CD4-positive, alpha-beta T cell (primary cell): ENCODE measurements at regions of chr14 and their contacts with region 1.

Region 1: GRCh38 chr14:106657460-106657859 is 1131.1 kb downstream of the TMEM121 start:
- DNase-seq: peak; percentile 40 to 81 (median 56)
- ATAC-seq: peak; percentile 76
- H3K4me3 ChIP-seq: no peak overlapping the region
- H3K4me3 Mint-ChIP-seq: no peak overlapping the region
- H3K27ac ChIP-seq: no peak overlapping the region
- H3K27ac Mint-ChIP-seq: no peak overlapping the region
- H3K4me1 ChIP-seq: peaks cover 14% of the 10 kb centered on the region
- H3K4me1 Mint-ChIP-seq: peaks cover 43% of the 10 kb centered on the region
- H3K27me3 ChIP-seq: no peaks in the 10 kb centered on the region
- H3K27me3 Mint-ChIP-seq: no peaks in the 10 kb centered on the region
- CTCF ChIP-seq: peak; percentile 67

Region 2: DNA sequence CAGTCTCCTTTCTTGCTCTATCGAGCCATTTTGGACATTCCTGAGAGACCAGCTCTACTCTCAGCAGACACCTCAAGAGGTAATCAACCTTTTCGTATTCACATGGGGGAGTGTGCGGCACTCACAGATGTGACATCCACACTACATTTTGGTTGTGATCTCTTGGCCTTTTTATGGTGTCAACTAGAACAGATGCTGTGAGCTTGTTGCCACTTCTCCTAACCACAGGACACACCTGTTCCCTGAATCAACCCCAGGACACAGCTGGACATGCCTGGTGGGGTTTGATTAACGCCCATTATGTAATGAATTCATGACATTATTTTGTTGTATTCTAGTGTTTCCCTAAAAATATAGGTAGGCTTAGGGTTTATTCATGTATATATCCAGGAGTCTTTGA is 12.6 kb after region 1 on chr14:
- CTCF ChIA-PET with region 1: no interaction called
- POLR2A ChIA-PET with region 1: no interaction called
- intact Hi-C with region 1: no loop called
- DNase-seq: no peak
- ATAC-seq: no peak
- H3K4me3 ChIP-seq: no peak overlapping the region
- H3K4me3 Mint-ChIP-seq: no peak overlapping the region
- H3K27ac ChIP-seq: no peak overlapping the region
- H3K27ac Mint-ChIP-seq: no peak overlapping the region
- H3K4me1 ChIP-seq: peaks cover 6% of the 10 kb centered on the region
- H3K4me1 Mint-ChIP-seq: peaks cover 15% of the 10 kb centered on the region
- H3K27me3 ChIP-seq: no peaks in the 10 kb centered on the region
- H3K27me3 Mint-ChIP-seq: peaks cover 20% of the 10 kb centered on the region
- CTCF ChIP-seq: no peak

Region 3: DNA sequence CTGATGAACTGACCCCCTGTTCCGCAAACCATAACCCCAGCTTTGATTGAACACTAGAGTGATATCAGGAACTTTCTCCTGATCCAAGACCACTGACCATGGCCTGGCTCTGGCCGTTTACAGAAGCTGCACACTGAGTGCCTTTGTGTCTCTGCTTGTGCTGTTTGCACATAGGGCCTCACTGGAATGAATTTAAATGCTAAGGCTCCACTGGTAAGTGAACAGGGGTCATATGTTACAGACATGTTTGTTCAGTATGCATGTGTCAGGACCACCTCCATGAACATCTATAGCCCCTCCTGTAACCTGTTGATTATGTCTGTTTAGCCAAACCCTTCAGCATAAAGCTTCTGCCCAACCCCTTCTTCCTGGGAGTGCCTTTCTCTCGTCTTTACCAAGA is 108.7 kb after region 1 on chr14:
- CTCF ChIA-PET with region 1: no interaction called
- POLR2A ChIA-PET with region 1: no interaction called
- intact Hi-C with region 1: loop called (anchors 5 kb)
- DNase-seq: no peak
- ATAC-seq: no peak
- H3K4me3 ChIP-seq: no peak overlapping the region
- H3K4me3 Mint-ChIP-seq: peak overlapping the region; percentile 52
- H3K27ac ChIP-seq: no peak overlapping the region
- H3K27ac Mint-ChIP-seq: no peak overlapping the region
- H3K4me1 ChIP-seq: peaks cover 26% of the 10 kb centered on the region
- H3K4me1 Mint-ChIP-seq: peaks cover 52% of the 10 kb centered on the region
- H3K27me3 ChIP-seq: no peaks in the 10 kb centered on the region
- H3K27me3 Mint-ChIP-seq: no peaks in the 10 kb centered on the region
- CTCF ChIP-seq: no peak